ENCODE measurements at regions of chr3 and their contacts with region 1.

Region 1: DNA sequence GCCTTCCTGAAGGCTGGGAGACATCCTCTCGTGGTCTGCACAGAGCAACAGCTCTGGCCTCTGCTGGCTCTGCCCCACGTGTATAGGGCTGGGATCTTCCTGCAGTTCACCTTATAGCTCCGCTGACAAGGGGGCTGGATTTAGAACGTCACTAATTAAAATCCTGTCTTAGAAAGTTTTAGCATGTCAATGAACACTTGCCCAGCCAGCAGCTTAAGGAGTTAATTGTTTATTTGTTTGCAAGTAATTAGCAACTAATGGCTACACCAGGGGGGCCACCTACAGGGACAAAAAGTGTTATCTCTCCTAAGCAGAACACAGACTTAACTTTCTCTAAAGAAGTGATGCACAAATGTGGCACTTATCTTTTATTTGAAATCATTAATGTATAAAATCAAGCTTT is at the start of gene HESX1:
- DNase-seq: no peak
- ATAC-seq: no peak
- H3K4me3 ChIP-seq: no peak within 1 kb of the TSS
- H3K27ac ChIP-seq: no peak within 1 kb of the TSS
- H3K4me1 ChIP-seq: no peaks in the 10 kb centered on the region
- H3K27me3 ChIP-seq: no peaks in the 10 kb centered on the region
- CTCF ChIP-seq: no peak
- POLR2A ChIP-seq: no peak
- total RNA-seq, gene HESX1: 0.47 to 1.5 (median 0.71) TPM in 5 of 9 donors, not detected in the others

Region 2: GRCh38 chr3:57184526-57184925 is 15.4 kb before region 1 on chr3:
- intact Hi-C with region 1: no loop called
- DNase-seq: no peak
- ATAC-seq: no peak
- H3K4me3 ChIP-seq: no peak overlapping the region
- H3K27ac ChIP-seq: no peak overlapping the region
- H3K4me1 ChIP-seq: no peaks in the 10 kb centered on the region
- H3K27me3 ChIP-seq: no peaks in the 10 kb centered on the region
- CTCF ChIP-seq: no peak
- POLR2A ChIP-seq: no peak

Region 3: DNA sequence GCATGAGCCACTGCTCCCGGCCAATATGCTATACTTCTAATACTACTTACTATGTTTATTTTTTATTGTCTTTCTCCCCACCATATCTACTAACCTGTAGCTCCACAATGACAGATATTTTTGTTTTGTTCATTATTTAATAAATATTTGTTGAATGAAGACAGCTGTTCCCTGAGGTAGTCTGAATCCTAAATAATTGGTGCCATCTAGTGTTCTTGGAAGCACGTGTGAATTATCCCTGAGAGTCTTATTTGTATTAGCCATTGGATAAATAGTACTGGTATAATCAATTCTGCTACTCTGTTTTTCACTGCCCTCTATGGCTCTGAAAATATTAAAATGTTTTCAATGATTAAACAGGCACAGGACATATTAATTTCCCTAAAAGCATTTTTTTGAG is 22.0 kb after region 1 on chr3:
- intact Hi-C with region 1: loop called in 1 of 10 experiments (anchors 2 kb)
- DNase-seq: no peak
- ATAC-seq: no peak
- H3K4me3 ChIP-seq: no peak overlapping the region
- H3K27ac ChIP-seq: no peak overlapping the region
- H3K4me1 ChIP-seq: peaks cover 0 to 16% (median 5%) of the 10 kb centered on the region in 12 donors
- H3K27me3 ChIP-seq: no peaks in the 10 kb centered on the region
- CTCF ChIP-seq: peak in 10 of 12 donors; percentile 9 to 53 (median 34)
- POLR2A ChIP-seq: no peak

Region 4: GRCh38 chr3:57464801-57465200 is 264.9 kb after region 1 on chr3:
- intact Hi-C with region 1: no loop called
- DNase-seq: no peak
- ATAC-seq: no peak
- H3K4me3 ChIP-seq: no peak overlapping the region
- H3K27ac ChIP-seq: no peak overlapping the region
- H3K4me1 ChIP-seq: no peaks in the 10 kb centered on the region
- H3K27me3 ChIP-seq: no peaks in the 10 kb centered on the region
- CTCF ChIP-seq: no peak
- POLR2A ChIP-seq: no peak

Measured in heart left ventricle (tissue), 16 donors.